CD8-positive, alpha-beta memory T cell (primary cell): ENCODE measurements at regions of chr1 and their contacts with region 1.

Region 1: GRCh38 chr1:231757101-231757404 is 130.5 kb downstream of the DISC1 start:
- DNase-seq: no peak
- H3K4me3 ChIP-seq: no peak overlapping the region
- H3K4me3 Mint-ChIP-seq: peak overlapping the region in 3 of 7 donors; percentile 4 to 33 (median 32)
- H3K27ac ChIP-seq: no peak overlapping the region
- H3K27ac Mint-ChIP-seq: peak overlapping the region in 1 of 8 donors; percentile 27
- H3K4me1 ChIP-seq: no peaks in the 10 kb centered on the region
- H3K4me1 Mint-ChIP-seq: peaks cover 0 to 3% (median 0%) of the 10 kb centered on the region in 3 donors
- H3K27me3 ChIP-seq: no peaks in the 10 kb centered on the region
- H3K27me3 Mint-ChIP-seq: peaks cover 0 to 4% of the 10 kb centered on the region in 2 donors

Region 2: DNA sequence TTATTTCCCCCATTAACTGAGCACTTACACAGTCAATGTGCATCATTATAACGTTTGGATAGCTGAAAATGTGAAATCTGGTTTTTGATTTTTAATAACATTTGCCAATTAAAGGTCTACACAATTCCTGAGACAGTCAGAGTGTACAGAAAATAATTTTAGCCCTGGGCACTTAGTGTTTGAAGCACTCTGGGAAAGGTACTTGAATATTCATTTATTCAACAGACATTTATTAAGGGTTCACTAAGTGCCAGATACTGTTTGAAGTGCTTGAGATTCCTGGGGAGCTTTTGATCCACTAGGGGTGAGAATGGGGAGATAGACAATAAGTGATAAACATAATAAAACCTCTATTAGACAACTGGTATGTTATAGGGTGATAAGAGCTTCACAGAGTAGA is 11.4 kb after region 1 on chr1:
- CTCF ChIA-PET with region 1: interaction called, 26 read pairs
- POLR2A ChIA-PET with region 1: no interaction called
- DNase-seq: no peak
- H3K4me3 ChIP-seq: no peak overlapping the region
- H3K4me3 Mint-ChIP-seq: no peak overlapping the region
- H3K27ac ChIP-seq: no peak overlapping the region
- H3K27ac Mint-ChIP-seq: peak overlapping the region in 1 of 8 donors; percentile 42
- H3K4me1 ChIP-seq: no peaks in the 10 kb centered on the region
- H3K4me1 Mint-ChIP-seq: no peaks in the 10 kb centered on the region
- H3K27me3 ChIP-seq: no peaks in the 10 kb centered on the region
- H3K27me3 Mint-ChIP-seq: peaks cover 0 to 2% of the 10 kb centered on the region in 2 donors

Region 3: DNA sequence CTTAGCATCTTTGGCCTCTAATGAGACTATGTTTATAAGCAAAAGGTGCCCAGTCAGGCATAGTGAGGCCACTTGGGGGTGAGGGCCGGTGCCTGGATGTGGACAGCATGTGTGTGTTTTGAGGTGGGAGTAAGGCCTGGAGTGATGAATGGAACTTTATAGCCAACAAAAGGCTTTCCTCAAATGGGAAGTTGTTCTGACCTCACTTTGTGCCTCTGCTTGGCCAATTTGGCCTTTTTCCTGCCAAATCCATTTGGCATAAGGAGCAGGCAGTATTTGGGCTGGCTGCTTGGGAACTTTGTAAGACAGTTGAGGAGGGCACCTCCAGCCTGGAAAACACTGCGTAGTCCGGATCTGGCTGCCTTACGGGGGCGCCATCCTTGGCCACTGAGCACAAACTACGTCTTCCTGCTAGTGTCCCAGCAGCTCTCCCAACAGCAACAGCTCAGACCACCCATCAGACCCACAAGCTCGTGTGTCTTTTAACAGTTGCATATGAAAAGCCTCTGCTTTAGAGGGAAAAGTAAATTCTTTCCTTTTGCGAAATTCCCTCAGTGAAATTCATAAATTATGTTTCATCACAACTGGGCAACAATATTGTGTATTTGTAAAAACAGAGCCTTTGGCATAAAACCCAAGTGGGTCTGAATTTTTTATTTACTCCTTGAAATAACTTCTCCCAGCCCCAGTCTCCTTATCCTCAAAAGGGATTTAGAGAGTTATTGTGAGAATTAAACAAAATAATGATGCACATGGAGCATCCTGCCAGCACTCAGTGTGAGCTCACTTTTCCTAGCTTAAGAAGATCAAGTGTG is 192.4 kb after region 1 on chr1:
- CTCF ChIA-PET with region 1: no interaction called
- POLR2A ChIA-PET with region 1: no interaction called
- DNase-seq: no peak
- H3K4me3 ChIP-seq: no peak overlapping the region
- H3K4me3 Mint-ChIP-seq: no peak overlapping the region
- H3K27ac ChIP-seq: no peak overlapping the region
- H3K27ac Mint-ChIP-seq: peak overlapping the region in 1 of 8 donors; percentile 39
- H3K4me1 ChIP-seq: no peaks in the 10 kb centered on the region
- H3K4me1 Mint-ChIP-seq: peaks cover 0 to 6% (median 0%) of the 10 kb centered on the region in 3 donors
- H3K27me3 ChIP-seq: no peaks in the 10 kb centered on the region
- H3K27me3 Mint-ChIP-seq: no peaks in the 10 kb centered on the region